AG04450 (cell line): ENCODE measurements at regions of chr19 and their contacts with region 1.

Region 1: GRCh38 chr19:32324631-32325285 is 20.7 kb upstream of the ZNF507 start:
- DNase-seq: no peak
- H3K4me3 ChIP-seq: no peak overlapping the region
- H3K27ac ChIP-seq: no peak overlapping the region
- H3K27me3 ChIP-seq: no peaks in the 10 kb centered on the region
- CTCF ChIP-seq: no peak

Region 2: DNA sequence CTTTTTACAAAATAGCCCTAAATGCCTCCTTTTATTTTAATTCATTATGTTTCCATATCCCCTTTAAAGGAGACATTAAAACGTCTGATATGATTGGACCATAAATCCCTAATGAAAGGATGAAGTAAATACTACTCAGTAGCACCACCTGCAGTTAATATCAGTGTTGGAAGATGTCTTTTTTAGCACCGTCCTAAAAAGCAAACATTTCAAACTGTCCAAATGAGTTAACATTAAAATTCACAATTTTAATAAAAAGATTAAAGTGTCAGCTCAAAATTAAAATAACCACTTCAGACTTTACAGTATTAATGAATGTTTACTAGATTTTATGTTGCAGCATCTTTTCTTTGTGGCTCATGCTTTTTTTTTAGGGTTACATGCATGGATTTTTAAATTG is 33.0 kb after region 1 on chr19:
- CTCF ChIA-PET with region 1: no interaction called
- POLR2A ChIA-PET with region 1: no interaction called
- DNase-seq: no peak
- H3K4me3 ChIP-seq: no peak overlapping the region
- H3K27ac ChIP-seq: no peak overlapping the region
- H3K27me3 ChIP-seq: no peaks in the 10 kb centered on the region
- CTCF ChIP-seq: peak; percentile 44

Region 3: GRCh38 chr19:32627714-32628270 is 303.0 kb after region 1 on chr19:
- CTCF ChIA-PET with region 1: no interaction called
- POLR2A ChIA-PET with region 1: interaction called, 12 read pairs
- DNase-seq: no peak
- H3K4me3 ChIP-seq: no peak overlapping the region
- H3K27ac ChIP-seq: no peak overlapping the region
- H3K27me3 ChIP-seq: no peaks in the 10 kb centered on the region
- CTCF ChIP-seq: no peak